Posterior cingulate gyrus (tissue), 11 donors: ENCODE measurements at regions of chr2 and their contacts with region 1.

Region 1: GRCh38 chr2:101252408-101253012 is at the start of gene CNOT11:
- DNase-seq: peak; percentile 92 to 99 (median 96)

Region 2: GRCh38 chr2:101145406-101145805 is 107.1 kb before region 1 on chr2:
- intact Hi-C with region 1: no loop called
- DNase-seq: no peak

Region 3: DNA sequence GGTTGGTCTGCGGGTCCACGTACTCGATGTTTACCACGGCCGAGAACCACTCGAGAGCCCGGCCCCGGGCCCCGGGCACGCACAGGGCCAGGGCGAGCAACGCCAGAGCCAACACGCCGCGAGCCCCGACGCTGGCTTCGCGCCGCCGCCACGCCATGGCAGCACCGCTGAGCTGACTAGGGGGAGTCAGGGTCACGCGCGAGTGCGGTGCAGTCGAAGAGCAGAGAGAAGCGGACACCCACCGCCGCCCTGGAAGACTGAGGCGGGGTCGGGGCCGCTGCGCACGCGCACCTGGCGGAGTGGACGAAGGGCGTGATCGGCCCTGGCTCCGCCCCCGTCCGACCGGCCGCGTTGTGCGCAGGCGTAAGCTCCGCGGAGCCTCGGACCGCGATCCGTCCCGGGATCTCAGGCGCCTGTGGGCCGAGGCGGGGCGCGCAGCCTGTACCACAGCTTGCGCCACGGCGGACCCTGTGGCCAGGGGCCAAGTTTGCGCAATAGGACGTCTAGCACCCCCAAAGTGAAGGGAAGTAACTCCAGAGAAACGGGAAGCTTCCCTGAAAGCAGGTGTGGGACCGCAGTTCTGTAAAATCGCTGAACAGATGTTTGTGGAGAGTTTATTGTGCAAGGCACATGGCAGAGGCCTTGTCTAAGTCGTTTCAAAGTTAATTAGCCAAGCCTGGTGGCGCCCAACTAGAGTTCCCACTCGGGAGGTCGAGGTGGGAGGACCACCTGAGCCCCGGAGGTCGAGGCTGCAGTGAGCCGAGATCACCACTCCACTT is 56.1 kb after region 1 on chr2 and contains the start of gene RNF149:
- intact Hi-C with region 1: loop called (anchors 5 kb)
- DNase-seq: peak; percentile 85 to 98 (median 89)